OCI-LY7 (cell line): ENCODE measurements at regions of chr2 and their contacts with region 1.

Region 1: GRCh38 chr2:64730551-64731262 is 77.0 kb upstream of the SERTAD2 start:
- DNase-seq: peak; percentile 54
- H3K4me3 ChIP-seq: peak overlapping the region; percentile 62
- H3K27ac ChIP-seq: peak overlapping the region; percentile 97
- H3K4me1 ChIP-seq: peaks cover 82% of the 10 kb centered on the region
- CTCF ChIP-seq: no peak

Region 2: GRCh38 chr2:64644177-64645004 is 86.3 kb before region 1 on chr2:
- CTCF ChIA-PET with region 1: interaction called, 3 read pairs
- POLR2A ChIA-PET with region 1: interaction called, 19 read pairs
- intact Hi-C with region 1: no loop called
- DNase-seq: peak; percentile 79
- H3K4me3 ChIP-seq: peak overlapping the region; percentile 67
- H3K27ac ChIP-seq: peak overlapping the region; percentile 88
- H3K4me1 ChIP-seq: peaks cover 100% of the 10 kb centered on the region
- CTCF ChIP-seq: no peak

Region 3: GRCh38 chr2:64661741-64662169 is 69.0 kb before region 1 on chr2:
- CTCF ChIA-PET with region 1: interaction called, 8 read pairs
- POLR2A ChIA-PET with region 1: interaction called, 123 read pairs
- intact Hi-C with region 1: loop called (anchors 1 kb)
- DNase-seq: peak; percentile 74
- H3K4me3 ChIP-seq: peak overlapping the region; percentile 51
- H3K27ac ChIP-seq: peak overlapping the region; percentile 95
- H3K4me1 ChIP-seq: peaks cover 100% of the 10 kb centered on the region
- CTCF ChIP-seq: peak; percentile 75

Region 4: DNA sequence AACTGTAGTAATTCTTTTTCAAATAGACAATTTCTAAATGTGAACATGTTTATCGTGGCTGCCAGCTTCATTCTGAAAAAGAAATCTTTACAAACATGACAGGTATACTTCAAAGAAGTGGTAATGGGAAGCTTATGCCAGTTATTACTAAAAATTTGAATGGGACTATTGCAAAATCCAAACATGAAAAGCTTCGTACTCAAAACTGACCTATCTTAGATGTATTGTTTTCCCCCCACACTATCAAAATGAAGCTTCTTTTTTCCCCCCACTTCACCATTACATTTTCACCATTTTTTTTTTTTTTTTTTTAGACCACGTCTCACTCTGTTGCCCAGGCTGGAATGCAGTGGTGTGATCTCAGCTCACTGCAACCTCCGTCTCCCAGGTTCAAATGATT is 26.5 kb before region 1 on chr2:
- CTCF ChIA-PET with region 1: no interaction called
- POLR2A ChIA-PET with region 1: interaction called, 14 read pairs
- intact Hi-C with region 1: no loop called
- DNase-seq: no peak
- H3K4me3 ChIP-seq: no peak overlapping the region
- H3K27ac ChIP-seq: no peak overlapping the region
- H3K4me1 ChIP-seq: peaks cover 20% of the 10 kb centered on the region
- CTCF ChIP-seq: no peak

Region 5: GRCh38 chr2:64716569-64716968 is 14.1 kb before region 1 on chr2:
- CTCF ChIA-PET with region 1: interaction called, 4 read pairs
- POLR2A ChIA-PET with region 1: interaction called, 42 read pairs
- intact Hi-C with region 1: no loop called
- DNase-seq: no peak
- H3K4me3 ChIP-seq: no peak overlapping the region
- H3K27ac ChIP-seq: no peak overlapping the region
- H3K4me1 ChIP-seq: peaks cover 6% of the 10 kb centered on the region
- CTCF ChIP-seq: no peak

Region 6: DNA sequence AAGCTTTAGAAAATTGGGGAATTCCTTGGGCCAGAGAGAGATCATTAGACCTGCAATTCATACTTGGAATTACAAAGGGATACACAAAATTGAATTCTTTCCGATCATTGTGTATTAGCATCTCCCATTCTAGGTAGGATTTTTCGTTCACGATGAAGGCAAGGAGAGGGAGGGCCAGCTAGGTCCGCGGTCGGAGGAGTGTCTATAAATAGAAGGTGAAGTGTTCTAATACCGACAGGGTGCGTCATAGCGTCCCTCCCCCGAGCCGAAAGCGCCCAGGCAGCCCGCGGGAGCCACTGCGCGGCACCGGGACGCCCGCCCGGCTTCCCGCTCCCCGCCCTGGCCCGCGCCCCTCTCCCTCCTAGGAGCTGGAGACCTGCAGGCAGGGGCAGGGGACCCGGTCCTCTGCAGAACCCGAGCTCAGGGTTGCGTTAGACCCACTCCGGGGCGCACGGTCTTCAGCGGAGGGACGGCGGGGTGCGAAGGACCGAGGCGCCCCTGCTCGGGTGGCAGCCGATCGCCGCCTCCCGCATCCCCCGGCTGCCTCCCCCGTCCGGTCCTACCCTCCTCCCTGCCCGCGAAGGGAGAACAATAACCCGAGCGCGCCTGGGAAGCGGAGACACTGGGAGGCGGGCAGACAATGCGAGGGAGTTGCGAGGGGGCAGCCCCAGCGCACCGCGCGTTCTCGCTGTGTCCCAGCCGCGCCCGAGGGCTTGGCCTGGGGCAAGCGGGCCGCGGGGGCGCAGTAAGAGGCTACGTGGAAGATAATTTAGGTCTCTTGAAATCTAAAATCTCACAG is 37.2 kb after region 1 on chr2:
- CTCF ChIA-PET with region 1: no interaction called
- POLR2A ChIA-PET with region 1: no interaction called
- intact Hi-C with region 1: loop called (anchors 1 kb)
- DNase-seq: peak; percentile 78
- H3K4me3 ChIP-seq: peak overlapping the region; percentile 69
- H3K27ac ChIP-seq: peak overlapping the region; percentile 16
- H3K4me1 ChIP-seq: peaks cover 34% of the 10 kb centered on the region
- CTCF ChIP-seq: peak; percentile 40; the same call in 1 of the 2 replicates

Region 7: GRCh38 chr2:64779117-64779690 is 48.5 kb after region 1 on chr2:
- CTCF ChIA-PET with region 1: no interaction called
- POLR2A ChIA-PET with region 1: no interaction called
- intact Hi-C with region 1: no loop called
- DNase-seq: no peak
- H3K4me3 ChIP-seq: no peak overlapping the region
- H3K27ac ChIP-seq: no peak overlapping the region
- H3K4me1 ChIP-seq: no peaks in the 10 kb centered on the region
- CTCF ChIP-seq: no peak

Region 8: DNA sequence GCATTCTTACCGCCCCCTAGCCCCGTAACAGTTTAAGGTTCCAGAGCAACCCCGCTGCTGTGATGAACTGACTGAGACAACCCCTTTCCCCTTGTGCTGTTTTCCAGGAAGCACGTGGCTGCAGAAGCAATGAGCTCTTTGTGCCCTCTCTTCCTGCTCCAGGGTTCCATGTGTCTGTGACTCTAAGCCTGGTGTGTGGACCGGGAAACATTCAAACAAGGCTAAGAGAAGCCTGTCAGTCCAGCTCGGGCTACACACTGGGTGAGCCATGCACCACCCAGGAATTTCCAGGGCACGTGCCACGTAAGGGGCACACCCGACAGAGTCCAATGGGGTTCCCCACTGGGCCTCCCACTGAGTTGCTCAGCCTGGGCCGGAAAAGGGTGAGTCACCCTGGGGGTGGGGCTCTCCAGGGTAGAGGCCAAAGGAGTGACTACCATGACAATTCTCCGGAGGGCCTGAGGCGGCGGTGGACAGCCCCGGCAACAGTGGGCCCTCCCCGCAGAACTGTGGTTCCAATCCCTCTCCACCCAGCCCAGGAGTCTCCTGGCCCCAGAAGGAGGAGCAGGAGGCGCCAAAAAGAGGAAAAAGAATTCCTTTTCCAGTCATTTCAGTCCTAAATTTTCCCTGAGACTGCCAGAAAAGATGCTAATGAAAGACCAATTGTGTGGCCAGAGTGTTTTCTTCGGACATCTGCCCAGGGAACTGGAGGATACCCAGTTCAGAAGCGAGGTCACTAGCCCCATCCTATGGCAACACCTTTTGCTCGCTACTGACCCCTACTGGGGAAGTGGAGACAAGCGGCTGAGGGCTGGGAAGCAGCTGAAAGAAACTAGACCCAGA is 100.6 kb after region 1 on chr2:
- CTCF ChIA-PET with region 1: no interaction called
- POLR2A ChIA-PET with region 1: no interaction called
- intact Hi-C with region 1: no loop called
- DNase-seq: peak; percentile 84
- H3K4me3 ChIP-seq: no peak overlapping the region
- H3K27ac ChIP-seq: no peak overlapping the region
- H3K4me1 ChIP-seq: peaks cover 6% of the 10 kb centered on the region
- CTCF ChIP-seq: peak; percentile 99

Region 9: GRCh38 chr2:64865073-64865830 is 134.5 kb after region 1 on chr2:
- CTCF ChIA-PET with region 1: no interaction called
- POLR2A ChIA-PET with region 1: no interaction called
- intact Hi-C with region 1: no loop called
- DNase-seq: peak; percentile 76
- H3K4me3 ChIP-seq: peak overlapping the region; percentile 69
- H3K27ac ChIP-seq: peak overlapping the region; percentile 20
- H3K4me1 ChIP-seq: peaks cover 54% of the 10 kb centered on the region
- CTCF ChIP-seq: peak; percentile 75

Region 10: DNA sequence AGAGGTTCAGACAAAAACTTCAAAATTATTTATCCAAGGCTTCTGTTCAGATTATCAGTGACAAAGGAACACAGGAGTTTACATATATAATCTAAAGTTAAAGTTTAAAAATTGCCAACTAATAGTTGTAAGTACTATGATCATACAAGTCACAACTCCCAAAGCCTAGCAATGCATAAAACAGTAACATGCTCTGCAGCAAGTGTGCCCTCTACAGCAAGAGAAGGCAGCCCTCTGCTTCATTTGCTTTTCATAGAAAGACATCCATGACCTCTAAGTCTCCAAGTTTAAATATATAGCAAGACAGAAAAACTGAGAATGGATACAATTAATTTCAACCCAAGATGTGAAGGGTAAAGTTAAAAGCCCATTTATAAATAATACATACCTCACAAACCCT is 385.9 kb after region 1 on chr2:
- CTCF ChIA-PET with region 1: no interaction called
- POLR2A ChIA-PET with region 1: no interaction called
- intact Hi-C with region 1: no loop called
- DNase-seq: no peak
- H3K4me3 ChIP-seq: no peak overlapping the region
- H3K27ac ChIP-seq: no peak overlapping the region
- H3K4me1 ChIP-seq: peaks cover 31% of the 10 kb centered on the region
- CTCF ChIP-seq: peak; percentile 58